Caco-2 (cell line): ENCODE measurements at regions of chr15 and their contacts with region 1.

Region 1: GRCh38 chr15:41557673-41558399 is 1.2 kb upstream of the TYRO3 start:
- DNase-seq: peak; percentile 73 to 79
- H3K4me3 ChIP-seq: peak overlapping the region; percentile 56
- H3K4me3 Mint-ChIP-seq: peak overlapping the region; percentile 94
- H3K27ac Mint-ChIP-seq: peak overlapping the region; percentile 91
- H3K4me1 ChIP-seq: peaks cover 38% of the 10 kb centered on the region
- H3K4me1 Mint-ChIP-seq: peaks cover 27% of the 10 kb centered on the region
- H3K27me3 ChIP-seq: no peaks in the 10 kb centered on the region
- H3K27me3 Mint-ChIP-seq: no peaks in the 10 kb centered on the region
- CTCF ChIP-seq: peak; percentile 82 to 92

Region 2: DNA sequence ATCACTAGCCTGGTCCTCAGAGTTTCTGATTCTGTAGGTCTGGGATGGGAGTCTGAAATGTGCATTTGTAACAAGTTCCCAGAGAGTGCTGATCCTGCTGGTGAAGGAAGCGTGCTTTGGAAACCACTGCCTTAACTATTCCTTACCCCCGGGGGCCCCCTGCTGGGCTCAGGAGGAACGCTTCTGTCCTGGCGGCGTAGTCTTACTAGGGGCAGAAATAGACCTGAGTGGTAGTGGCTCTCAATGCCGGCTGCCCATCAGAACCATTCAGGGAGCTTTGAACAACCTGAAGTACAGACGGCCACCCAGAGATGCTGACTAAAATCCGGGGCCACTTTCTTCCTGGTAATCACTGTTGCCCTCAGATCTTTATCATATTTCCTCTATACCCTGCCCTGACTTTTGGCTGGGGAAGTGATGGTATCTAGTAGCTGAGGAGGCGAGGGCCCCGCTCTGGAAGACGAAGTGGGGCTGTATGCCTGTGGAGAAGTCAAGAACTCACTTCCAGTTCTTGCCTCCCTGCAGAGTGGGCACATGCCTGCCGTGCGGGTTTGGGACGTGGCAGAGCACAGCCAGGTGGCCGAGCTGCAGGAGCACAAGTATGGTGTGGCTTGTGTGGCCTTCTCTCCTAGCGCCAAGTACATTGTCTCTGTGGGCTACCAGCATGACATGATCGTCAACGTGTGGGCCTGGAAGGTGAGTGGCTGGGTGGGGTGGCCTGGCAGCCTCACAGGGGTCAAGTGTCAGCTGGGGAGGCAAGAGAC is 253.8 kb after region 1 on chr15:
- CTCF ChIA-PET with region 1: interaction called, 3 read pairs
- POLR2A ChIA-PET with region 1: no interaction called
- intact Hi-C with region 1: loop called (anchors 1 kb)
- DNase-seq: peak; percentile 79 to 86
- H3K4me3 ChIP-seq: no peak overlapping the region
- H3K4me3 Mint-ChIP-seq: no peak overlapping the region
- H3K27ac Mint-ChIP-seq: no peak overlapping the region
- H3K4me1 ChIP-seq: no peaks in the 10 kb centered on the region
- H3K4me1 Mint-ChIP-seq: no peaks in the 10 kb centered on the region
- H3K27me3 ChIP-seq: no peaks in the 10 kb centered on the region
- H3K27me3 Mint-ChIP-seq: no peaks in the 10 kb centered on the region
- CTCF ChIP-seq: peak; percentile 87 to 90